ENCODE measurements at regions of chr4 and their contacts with region 1.

Region 1: GRCh38 chr4:2220016-2220630 is 21.8 kb downstream of the HAUS3 start:
- DNase-seq: peak; percentile 55 to 59
- ATAC-seq: peak; percentile 81 to 93 (median 88)
- H3K4me3 ChIP-seq: no peak overlapping the region
- H3K27ac ChIP-seq: no peak overlapping the region
- H3K4me1 ChIP-seq: peaks cover 0 to 7% (median 3%) of the 10 kb centered on the region in 9 donors
- H3K27me3 ChIP-seq: no peaks in the 10 kb centered on the region
- CTCF ChIP-seq: peak; percentile 68 to 88 (median 84)

Region 2: GRCh38 chr4:2436301-2436700 is 216.2 kb after region 1 on chr4:
- intact Hi-C with region 1: loop called in 7 of 10 experiments (anchors 5 to 10 kb)
- DNase-seq: no peak
- ATAC-seq: peak in 2 of 8 donors; percentile 46 to 57
- H3K4me3 ChIP-seq: no peak overlapping the region
- H3K27ac ChIP-seq: no peak overlapping the region
- H3K4me1 ChIP-seq: no peaks in the 10 kb centered on the region
- H3K27me3 ChIP-seq: peaks cover 0 to 3% (median 0%) of the 10 kb centered on the region in 7 donors
- CTCF ChIP-seq: peak in 5 of 9 donors; percentile 9 to 40 (median 24)

Region 3: GRCh38 chr4:2441393-2442174 is 221.5 kb after region 1 on chr4:
- intact Hi-C with region 1: loop called in 8 of 10 experiments (anchors 5 to 10 kb)
- DNase-seq: peak in 1 of 2 donors; percentile 64
- ATAC-seq: peak; percentile 19 to 75 (median 66)
- H3K4me3 ChIP-seq: no peak overlapping the region
- H3K27ac ChIP-seq: no peak overlapping the region
- H3K4me1 ChIP-seq: peaks cover 0 to 6% (median 0%) of the 10 kb centered on the region in 9 donors
- H3K27me3 ChIP-seq: no peaks in the 10 kb centered on the region
- CTCF ChIP-seq: peak; percentile 43 to 79 (median 66)

Region 4: GRCh38 chr4:2449511-2450392 is 229.6 kb after region 1 on chr4:
- intact Hi-C with region 1: loop called in 6 of 10 experiments (anchors 5 to 10 kb)
- DNase-seq: no peak
- ATAC-seq: no peak
- H3K4me3 ChIP-seq: no peak overlapping the region
- H3K27ac ChIP-seq: no peak overlapping the region
- H3K4me1 ChIP-seq: no peaks in the 10 kb centered on the region
- H3K27me3 ChIP-seq: no peaks in the 10 kb centered on the region
- CTCF ChIP-seq: no peak

Region 5: GRCh38 chr4:2462218-2462991 is 242.3 kb after region 1 on chr4:
- intact Hi-C with region 1: loop called in 8 of 10 experiments (anchors 1 to 10 kb)
- DNase-seq: peak; percentile 54 to 75
- ATAC-seq: peak; percentile 89 to 97 (median 94)
- H3K4me3 ChIP-seq: peak overlapping the region; percentile 5 to 65 (median 56)
- H3K27ac ChIP-seq: peak overlapping the region in 8 of 10 donors; percentile 1 to 68 (median 34)
- H3K4me1 ChIP-seq: peaks cover 3 to 17% (median 9%) of the 10 kb centered on the region in 9 donors
- H3K27me3 ChIP-seq: peaks cover 0 to 15% (median 8%) of the 10 kb centered on the region in 7 donors
- CTCF ChIP-seq: peak; percentile 34 to 80 (median 65)

Region 6: GRCh38 chr4:2468445-2469192 is 248.5 kb after region 1 on chr4 and contains the start of gene RNF4:
- intact Hi-C with region 1: loop called in 6 of 10 experiments (anchors 5 to 10 kb)
- DNase-seq: peak; percentile 95 to 97
- ATAC-seq: peak; percentile 94 to 98 (median 96)
- H3K4me3 ChIP-seq: peak within 1 kb of the TSS; percentile 61 to 100 (median 94)
- H3K27ac ChIP-seq: peak within 1 kb of the TSS; percentile 78 to 99 (median 97)
- H3K4me1 ChIP-seq: peaks cover 4 to 39% (median 30%) of the 10 kb centered on the region in 9 donors
- H3K27me3 ChIP-seq: no peaks in the 10 kb centered on the region
- CTCF ChIP-seq: no peak
- total RNA-seq, gene RNF4: 27.4 to 42.1 (median 30.6) TPM

Region 7: DNA sequence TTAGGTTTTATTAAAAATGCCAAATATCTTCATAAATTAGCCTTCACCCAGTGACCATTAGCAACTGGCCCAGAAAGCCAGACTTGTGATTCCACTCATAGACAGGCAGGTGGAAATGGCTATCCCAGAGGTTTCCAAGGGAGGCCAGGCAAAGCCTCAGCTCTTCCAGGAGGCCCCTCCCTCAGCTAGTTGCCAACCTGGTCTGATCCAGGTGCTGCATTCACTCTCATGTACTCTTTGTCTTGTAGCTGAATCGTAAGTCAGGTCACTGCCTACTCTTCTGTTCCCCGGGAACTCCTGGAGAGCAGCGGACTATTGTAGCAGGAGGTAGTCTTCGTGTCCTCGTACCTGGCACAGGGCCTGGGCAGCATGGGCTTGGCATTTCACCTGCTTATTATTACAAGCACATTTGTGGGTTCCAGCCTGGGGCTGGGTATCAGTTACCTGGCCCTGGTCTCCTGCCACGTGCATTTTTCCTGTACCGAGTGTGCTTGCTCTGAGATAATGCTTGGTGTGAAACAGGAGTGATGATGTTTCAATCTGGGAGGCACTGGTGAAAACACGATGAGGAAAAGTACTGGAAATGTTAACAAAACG is 417.9 kb after region 1 on chr4:
- intact Hi-C with region 1: loop called in 1 of 10 experiments (anchors 5 kb)
- DNase-seq: no peak
- ATAC-seq: peak in 3 of 8 donors; percentile 18 to 60 (median 37)
- H3K4me3 ChIP-seq: no peak overlapping the region
- H3K27ac ChIP-seq: no peak overlapping the region
- H3K4me1 ChIP-seq: peaks cover 0 to 28% (median 8%) of the 10 kb centered on the region in 9 donors
- H3K27me3 ChIP-seq: no peaks in the 10 kb centered on the region
- CTCF ChIP-seq: no peak